BJ (cell line): ENCODE measurements at regions of chr10 and their contacts with region 1.

Region 1: GRCh38 chr10:5623081-5623748 is 43.2 kb downstream of the ASB13 start:
- DNase-seq: no peak
- H3K4me3 ChIP-seq: no peak overlapping the region
- H3K27me3 ChIP-seq: no peaks in the 10 kb centered on the region
- CTCF ChIP-seq: peak; percentile 92

Region 2: DNA sequence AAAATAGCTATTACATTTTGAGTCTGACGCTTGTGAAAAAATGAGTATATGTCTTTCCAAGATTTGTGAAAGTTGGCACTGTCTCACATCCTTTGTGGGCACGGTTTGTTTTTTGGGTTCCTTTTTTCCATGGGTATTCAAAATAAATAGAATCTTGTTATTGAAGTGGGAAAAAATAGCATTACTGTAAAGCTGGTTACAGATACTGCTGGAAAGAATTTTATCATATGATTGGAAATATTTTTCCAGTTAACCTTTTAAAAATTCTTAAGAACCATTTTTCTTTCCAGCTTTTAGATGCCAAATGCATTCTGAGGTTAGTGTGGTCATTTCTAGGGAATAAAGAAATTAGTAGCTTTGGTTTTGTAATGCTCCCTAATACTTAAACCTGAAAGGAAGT is 199.4 kb before region 1 on chr10:
- CTCF ChIA-PET with region 1: interaction called, 13 read pairs
- POLR2A ChIA-PET with region 1: no interaction called
- DNase-seq: no peak
- H3K4me3 ChIP-seq: no peak overlapping the region
- H3K27me3 ChIP-seq: no peaks in the 10 kb centered on the region
- CTCF ChIP-seq: no peak

Region 3: DNA sequence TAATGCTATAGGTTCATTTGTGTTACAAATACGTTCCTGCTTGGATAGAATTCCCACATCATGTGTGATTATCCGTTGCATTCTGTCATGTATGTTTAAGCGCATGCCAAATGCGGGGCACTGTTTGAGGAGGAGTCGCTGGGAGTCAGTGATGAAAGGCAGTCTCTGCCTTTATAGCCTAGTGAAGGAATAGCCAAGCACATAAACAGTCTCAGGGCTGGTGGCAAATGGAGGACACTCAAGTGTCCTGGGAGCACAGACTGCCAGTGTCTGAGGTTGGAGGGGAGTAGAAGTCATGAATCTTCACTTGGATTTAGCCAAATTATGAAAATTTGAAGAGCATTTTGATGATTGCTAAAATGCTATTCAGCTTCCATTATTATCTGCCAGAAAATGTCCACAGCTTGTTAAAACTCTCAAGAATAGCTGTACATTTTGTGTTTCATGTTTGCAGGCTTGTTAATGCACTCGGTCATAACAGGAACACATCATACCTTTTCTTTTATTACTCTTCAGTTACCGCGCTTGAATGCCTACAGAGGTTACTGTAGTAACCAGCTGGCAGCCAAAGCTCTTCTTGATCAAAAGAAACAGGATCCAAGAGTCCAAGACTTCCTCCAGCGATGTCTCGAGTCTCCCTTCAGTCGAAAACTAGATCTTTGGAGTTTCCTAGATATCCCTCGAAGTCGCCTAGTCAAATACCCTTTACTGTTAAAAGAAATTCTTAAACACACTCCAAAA is 169.3 kb before region 1 on chr10:
- CTCF ChIA-PET with region 1: interaction called, 493 read pairs
- POLR2A ChIA-PET with region 1: no interaction called
- DNase-seq: no peak
- H3K4me3 ChIP-seq: no peak overlapping the region
- H3K27me3 ChIP-seq: no peaks in the 10 kb centered on the region
- CTCF ChIP-seq: no peak

Region 4: DNA sequence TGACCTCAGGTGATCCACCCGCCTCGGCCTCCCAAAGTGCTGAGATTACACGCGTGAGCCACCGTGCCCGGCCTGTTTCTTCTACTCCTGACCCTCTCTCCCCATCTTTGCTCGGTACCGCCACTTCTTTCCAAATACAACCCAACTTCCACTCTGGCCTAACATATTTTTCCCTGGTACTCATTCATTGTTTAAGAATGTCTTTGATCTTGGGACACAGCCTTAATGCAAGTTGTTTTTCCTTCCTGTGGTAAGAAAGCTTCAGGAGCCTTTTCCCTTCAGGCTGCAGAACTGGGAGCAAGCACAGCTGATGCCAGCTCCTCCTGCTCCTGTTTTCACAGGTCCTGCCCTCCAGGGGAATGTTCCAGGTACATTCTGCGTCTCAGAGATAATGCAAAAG is 84.8 kb before region 1 on chr10:
- CTCF ChIA-PET with region 1: interaction called, 14 read pairs
- POLR2A ChIA-PET with region 1: no interaction called
- DNase-seq: no peak
- H3K4me3 ChIP-seq: no peak overlapping the region
- H3K27me3 ChIP-seq: no peaks in the 10 kb centered on the region
- CTCF ChIP-seq: no peak

Region 5: GRCh38 chr10:5583525-5584175 is 39.6 kb before region 1 on chr10:
- CTCF ChIA-PET with region 1: interaction called, 14 read pairs
- POLR2A ChIA-PET with region 1: no interaction called
- DNase-seq: no peak
- H3K4me3 ChIP-seq: no peak overlapping the region
- H3K27me3 ChIP-seq: no peaks in the 10 kb centered on the region
- CTCF ChIP-seq: no peak

Region 6: GRCh38 chr10:5684971-5685763 is 62.0 kb after region 1 on chr10:
- CTCF ChIA-PET with region 1: no interaction called
- POLR2A ChIA-PET with region 1: no interaction called
- DNase-seq: peak; percentile 22
- H3K4me3 ChIP-seq: peak overlapping the region; percentile 89
- H3K27me3 ChIP-seq: no peaks in the 10 kb centered on the region
- CTCF ChIP-seq: peak; percentile 69